Common myeloid progenitor, CD34-positive (primary cell): ENCODE measurements at regions of chr9 and their contacts with region 1.

Region 1: GRCh38 chr9:133075925-133076630 is 14.3 kb downstream of the CEL start:
- DNase-seq: no peak
- H3K4me3 ChIP-seq: no peak overlapping the region
- H3K27ac ChIP-seq: no peak overlapping the region
- H3K4me1 ChIP-seq: peaks cover 2 to 23% (median 13%) of the 10 kb centered on the region in 4 experiments
- H3K27me3 ChIP-seq: no peaks in the 10 kb centered on the region

Region 2: GRCh38 chr9:132780230-132781007 is 295.7 kb before region 1 on chr9:
- CTCF ChIA-PET with region 1: no interaction called
- POLR2A ChIA-PET with region 1: no interaction called
- DNase-seq: peak in 1 of 3 donors; percentile 7
- H3K4me3 ChIP-seq: peak overlapping the region in 4 of 7 experiments; percentile 14 to 62 (median 29)
- H3K27ac ChIP-seq: no peak overlapping the region
- H3K4me1 ChIP-seq: peaks cover 0 to 5% (median 3%) of the 10 kb centered on the region in 4 experiments
- H3K27me3 ChIP-seq: peaks cover 0 to 2% (median 0%) of the 10 kb centered on the region in 5 experiments

Region 3: DNA sequence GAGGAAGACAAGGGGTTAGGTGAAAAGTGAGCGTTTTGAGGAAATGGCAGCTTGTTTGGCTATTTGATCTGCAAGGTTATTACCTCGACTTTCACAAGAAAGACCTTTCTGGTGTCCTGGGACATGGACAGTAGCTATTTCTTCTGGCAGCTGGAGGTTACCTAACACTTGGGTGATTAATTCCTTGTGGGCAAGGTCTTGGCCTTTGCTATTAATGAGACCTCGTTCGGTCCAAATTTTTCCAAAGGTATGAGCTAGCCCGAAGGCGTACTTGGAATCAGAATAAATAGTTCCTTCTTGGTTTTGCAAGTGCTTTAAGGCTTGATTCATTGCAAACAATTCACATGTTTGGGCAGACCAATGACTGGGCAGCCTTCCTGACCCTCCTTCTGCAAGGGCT is 40.4 kb before region 1 on chr9:
- CTCF ChIA-PET with region 1: interaction called, 13 read pairs
- POLR2A ChIA-PET with region 1: no interaction called
- DNase-seq: no peak
- H3K4me3 ChIP-seq: no peak overlapping the region
- H3K27ac ChIP-seq: no peak overlapping the region
- H3K4me1 ChIP-seq: peaks cover 5 to 31% (median 20%) of the 10 kb centered on the region in 4 experiments
- H3K27me3 ChIP-seq: no peaks in the 10 kb centered on the region

Region 4: GRCh38 chr9:133048569-133048968 is 27.5 kb before region 1 on chr9:
- CTCF ChIA-PET with region 1: interaction called, 32 read pairs
- POLR2A ChIA-PET with region 1: no interaction called
- DNase-seq: peak; percentile 57 to 77 (median 76)
- H3K4me3 ChIP-seq: no peak overlapping the region
- H3K27ac ChIP-seq: no peak overlapping the region
- H3K4me1 ChIP-seq: peaks cover 0 to 4% (median 2%) of the 10 kb centered on the region in 4 experiments
- H3K27me3 ChIP-seq: no peaks in the 10 kb centered on the region

Region 5: GRCh38 chr9:133094842-133095393 is 18.8 kb after region 1 on chr9:
- CTCF ChIA-PET with region 1: interaction called, 23 read pairs
- POLR2A ChIA-PET with region 1: interaction called, 3 read pairs
- DNase-seq: no peak
- H3K4me3 ChIP-seq: no peak overlapping the region
- H3K27ac ChIP-seq: no peak overlapping the region
- H3K4me1 ChIP-seq: peaks cover 0 to 3% (median 0%) of the 10 kb centered on the region in 4 experiments
- H3K27me3 ChIP-seq: no peaks in the 10 kb centered on the region